Cardiac septum (tissue), 1 donor: ENCODE measurements at regions of chr21 and their contacts with region 1.

Region 1: GRCh38 chr21:34073032-34073869 is at the starts of genes MRPS6 and SLC5A3:
- DNase-seq: peak; percentile 94
- total RNA-seq, gene MRPS6: 30.2 TPM
- total RNA-seq, gene SLC5A3: 5.0 TPM

Region 2: DNA sequence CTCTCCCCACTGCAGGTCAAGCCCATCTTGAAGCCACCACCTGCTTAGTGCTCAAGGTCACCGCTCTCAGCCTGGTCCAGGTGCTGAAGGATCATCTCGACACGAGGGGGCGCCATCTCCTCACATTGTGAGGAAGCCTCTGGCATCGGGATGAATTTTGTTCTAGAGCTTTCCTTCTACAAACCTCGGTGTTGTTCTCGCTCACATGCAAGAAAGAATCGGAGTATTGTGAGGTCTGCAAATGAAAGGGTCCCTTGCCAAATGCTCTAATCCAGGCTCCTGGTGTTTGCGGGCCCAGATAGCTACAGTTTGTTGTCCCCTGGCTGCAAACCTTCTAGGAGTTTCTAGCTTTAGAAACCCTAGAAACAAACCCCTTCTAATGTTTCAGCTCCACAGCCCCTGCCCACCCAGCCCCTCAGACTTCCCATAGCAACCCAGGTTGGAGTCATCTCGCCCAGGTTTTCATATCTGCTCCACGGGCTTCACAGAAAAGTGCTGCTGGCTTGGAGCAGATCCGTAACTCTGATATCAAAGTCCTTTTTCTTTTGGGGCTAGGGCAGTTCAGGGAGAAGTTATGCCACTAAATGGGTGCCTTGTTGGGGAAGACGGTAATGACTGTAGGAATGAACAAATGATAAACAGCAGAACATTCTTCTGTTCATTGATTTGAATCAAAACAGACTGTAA is 149.0 kb before region 1 on chr21:
- intact Hi-C with region 1: loop called (anchors 5 kb)
- DNase-seq: peak; percentile 93

Region 3: GRCh38 chr21:33976082-33977016 is 96.9 kb before region 1 on chr21:
- intact Hi-C with region 1: loop called (anchors 5 kb)
- DNase-seq: no peak

Region 4: GRCh38 chr21:34037009-34037795 is 36.0 kb before region 1 on chr21:
- intact Hi-C with region 1: no loop called
- DNase-seq: no peak

Region 5: DNA sequence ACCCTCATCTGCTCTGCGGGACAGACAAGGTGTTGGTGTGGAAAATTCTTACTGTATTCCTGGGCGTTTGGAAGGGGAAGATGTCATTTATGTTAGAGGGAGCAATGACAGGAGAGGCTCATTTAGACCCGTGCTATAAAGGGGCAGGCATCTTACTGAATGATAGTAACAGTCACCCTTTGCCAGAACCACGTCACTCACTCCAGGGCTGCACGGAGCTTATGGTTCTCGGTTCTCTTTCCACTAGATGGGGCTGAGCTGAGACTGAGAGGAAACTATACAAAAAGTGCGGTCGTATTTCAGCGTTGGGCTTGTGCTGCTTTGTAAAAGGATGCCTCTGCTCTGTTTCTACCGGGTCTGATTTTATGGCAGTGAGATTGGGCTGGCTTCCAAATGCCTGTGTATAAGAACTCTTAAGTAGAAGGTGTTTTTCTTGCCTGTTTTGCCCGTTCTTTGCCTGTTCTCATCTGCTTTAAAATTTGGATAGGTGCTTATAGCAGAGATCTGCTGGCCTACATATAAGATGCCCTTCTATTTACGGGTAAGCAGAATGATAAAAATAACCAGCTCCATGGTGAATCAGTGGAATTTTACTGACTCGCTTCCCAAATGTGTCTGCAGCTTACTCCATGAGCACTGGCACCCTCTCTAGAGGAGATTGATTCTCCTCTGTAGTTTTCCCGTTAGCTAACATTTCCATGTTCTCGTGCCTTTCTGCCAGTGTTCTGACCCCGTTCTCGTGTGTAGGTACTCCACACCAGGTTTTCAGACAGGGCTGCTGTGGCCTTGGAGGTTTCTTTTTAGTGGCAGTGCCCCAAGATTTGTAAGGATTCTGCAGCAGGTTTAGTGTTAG is 56.0 kb after region 1 on chr21:
- intact Hi-C with region 1: loop called (anchors 5 kb)
- DNase-seq: no peak

Region 6: GRCh38 chr21:34202553-34203372 is 129.5 kb after region 1 on chr21:
- intact Hi-C with region 1: loop called (anchors 5 kb)
- DNase-seq: no peak

Region 7: GRCh38 chr21:34345091-34345871 is 272.0 kb after region 1 on chr21:
- intact Hi-C with region 1: loop called (anchors 5 kb)
- DNase-seq: no peak